ENCODE measurements at regions of chr12 and their contacts with region 1.

Region 1: DNA sequence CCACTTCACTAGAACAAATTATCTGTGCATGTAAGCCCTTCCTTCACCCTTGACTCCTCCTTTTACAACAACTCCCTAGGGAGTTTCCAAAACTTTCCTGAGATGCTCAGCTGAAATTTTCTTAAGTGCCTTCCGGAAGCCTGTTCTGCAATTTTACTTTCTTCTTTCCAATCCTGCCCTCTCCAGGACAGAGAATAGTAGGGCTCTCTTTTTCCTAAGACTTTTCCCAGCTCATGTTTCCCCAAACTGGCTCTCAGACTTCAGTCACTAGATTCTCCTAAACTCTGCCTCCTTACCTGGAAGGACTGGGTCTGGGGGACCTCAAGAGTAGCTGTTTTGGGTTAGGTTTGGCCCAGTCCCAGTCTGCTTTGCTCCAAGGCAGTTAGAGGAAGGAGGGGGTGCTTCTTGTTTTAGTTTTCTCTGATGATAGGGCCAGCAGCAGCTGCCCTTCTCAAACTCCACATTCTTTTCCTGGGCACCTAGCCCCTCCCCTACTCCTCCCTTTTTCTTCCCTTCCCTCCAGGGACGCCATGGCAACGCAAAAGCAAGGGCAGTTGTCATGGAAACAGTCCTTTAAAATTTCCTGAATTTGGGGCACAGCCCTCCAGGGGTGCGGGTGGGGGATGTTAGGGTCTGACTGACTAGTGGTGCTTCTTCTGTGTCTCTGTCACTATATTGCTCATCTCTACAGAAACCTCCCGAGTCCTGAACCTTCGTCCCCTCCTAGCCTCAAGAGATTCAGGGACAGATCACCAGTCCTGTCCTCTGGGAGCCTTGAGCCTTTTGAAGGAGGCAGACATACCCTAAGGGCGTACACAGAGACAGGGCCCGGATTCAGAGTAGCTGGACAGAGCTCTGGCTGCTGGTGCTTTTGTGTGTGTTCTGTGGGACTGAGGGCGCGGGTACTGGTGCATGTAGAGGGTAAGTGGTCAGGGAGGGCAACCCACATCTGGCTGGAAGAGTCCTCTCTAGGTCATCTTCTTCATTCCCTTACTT is 17.0 kb downstream of the PPP1R1A start:
- DNase-seq: peak; percentile 54
- ATAC-seq: peak; percentile 54
- H3K4me3 Mint-ChIP-seq: no peak overlapping the region
- H3K27ac Mint-ChIP-seq: no peak overlapping the region
- H3K4me1 Mint-ChIP-seq: peaks cover 28% of the 10 kb centered on the region
- H3K27me3 Mint-ChIP-seq: peaks cover 67% of the 10 kb centered on the region
- CTCF ChIP-seq: no peak

Region 2: GRCh38 chr12:54140588-54141388 is 430.7 kb before region 1 on chr12:
- CTCF ChIA-PET with region 1: no interaction called
- POLR2A ChIA-PET with region 1: no interaction called
- DNase-seq: no peak
- ATAC-seq: peak; percentile 59
- H3K4me3 Mint-ChIP-seq: no peak overlapping the region; the same call in 1 of the 2 replicates
- H3K27ac Mint-ChIP-seq: no peak overlapping the region
- H3K4me1 Mint-ChIP-seq: peaks cover 14% of the 10 kb centered on the region
- H3K27me3 Mint-ChIP-seq: peaks cover 90% of the 10 kb centered on the region
- CTCF ChIP-seq: no peak

Region 3: GRCh38 chr12:54549774-54550451 is 21.6 kb before region 1 on chr12:
- CTCF ChIA-PET with region 1: interaction called, 23 read pairs
- POLR2A ChIA-PET with region 1: interaction called, 3 read pairs
- DNase-seq: peak; percentile 42
- ATAC-seq: peak; percentile 69
- H3K4me3 Mint-ChIP-seq: peak overlapping the region; percentile 74
- H3K27ac Mint-ChIP-seq: no peak overlapping the region
- H3K4me1 Mint-ChIP-seq: peaks cover 27% of the 10 kb centered on the region
- H3K27me3 Mint-ChIP-seq: no peaks in the 10 kb centered on the region; the same call in 1 of the 2 replicates
- CTCF ChIP-seq: no peak

Region 4: GRCh38 chr12:54560374-54560858 is 11.1 kb before region 1 on chr12:
- CTCF ChIA-PET with region 1: interaction called, 16 read pairs
- POLR2A ChIA-PET with region 1: no interaction called
- DNase-seq: peak; percentile 91
- ATAC-seq: peak; percentile 97
- H3K4me3 Mint-ChIP-seq: peak overlapping the region; percentile 67
- H3K27ac Mint-ChIP-seq: no peak overlapping the region
- H3K4me1 Mint-ChIP-seq: peaks cover 31% of the 10 kb centered on the region
- H3K27me3 Mint-ChIP-seq: peaks cover 63% of the 10 kb centered on the region
- CTCF ChIP-seq: no peak

Region 5: DNA sequence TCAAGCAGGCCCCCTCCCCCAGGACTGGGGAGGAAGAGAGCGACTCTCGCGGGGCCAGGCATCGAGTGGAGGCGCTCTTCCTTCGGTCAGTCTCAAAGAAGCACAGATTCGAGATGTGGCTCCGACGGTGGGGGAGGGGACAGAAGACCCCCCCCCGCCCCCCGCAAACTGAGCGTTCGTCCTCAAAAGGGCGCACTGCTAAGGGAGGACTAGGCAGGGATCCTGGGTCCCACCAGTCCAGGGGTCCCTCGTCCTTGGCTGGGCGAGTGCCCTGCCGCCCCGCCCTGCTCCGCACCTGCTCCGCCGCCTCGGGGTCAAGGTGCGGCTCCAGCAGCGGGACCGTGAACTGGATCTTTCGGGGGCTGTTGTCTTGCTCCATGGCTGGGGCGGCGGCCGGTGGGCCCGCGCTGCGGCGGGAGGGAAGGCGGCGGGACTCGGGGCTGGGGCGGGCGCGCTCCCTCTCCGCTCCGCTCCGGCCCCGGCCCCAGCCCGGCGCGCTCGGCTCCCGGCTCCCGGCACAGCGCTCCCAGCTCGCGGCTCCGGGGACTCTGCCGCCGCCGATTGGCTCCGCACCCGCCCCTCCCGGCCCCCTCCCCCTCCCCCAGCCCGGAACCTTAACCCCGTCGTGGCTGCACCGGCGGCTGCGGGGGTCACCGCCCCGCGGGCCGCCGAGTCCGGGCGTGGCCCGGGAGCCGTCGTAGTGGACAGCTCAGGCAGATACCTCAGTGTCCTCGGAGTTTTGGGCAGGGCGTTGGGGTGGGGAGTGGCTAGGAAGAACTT is 16.8 kb after region 1 on chr12 and contains the start of gene PPP1R1A:
- CTCF ChIA-PET with region 1: interaction called, 16 read pairs
- POLR2A ChIA-PET with region 1: interaction called, 3 read pairs
- DNase-seq: peak; percentile 53
- ATAC-seq: peak; percentile 65
- H3K4me3 Mint-ChIP-seq: peak within 1 kb of the TSS; percentile 73
- H3K27ac Mint-ChIP-seq: no peak within 1 kb of the TSS
- H3K4me1 Mint-ChIP-seq: peaks cover 57% of the 10 kb centered on the region
- H3K27me3 Mint-ChIP-seq: peaks cover 78% of the 10 kb centered on the region
- CTCF ChIP-seq: no peak
- total RNA-seq, gene PPP1R1A: 12.4 to 15.5 TPM (median 13.1 TPM) in 3 replicates

Region 6: GRCh38 chr12:54596526-54596946 is 25.0 kb after region 1 on chr12:
- CTCF ChIA-PET with region 1: interaction called, 90 read pairs
- POLR2A ChIA-PET with region 1: no interaction called
- DNase-seq: peak; percentile 86
- ATAC-seq: peak; percentile 94
- H3K4me3 Mint-ChIP-seq: no peak overlapping the region
- H3K27ac Mint-ChIP-seq: no peak overlapping the region
- H3K4me1 Mint-ChIP-seq: peaks cover 5% of the 10 kb centered on the region
- H3K27me3 Mint-ChIP-seq: peaks cover 82% of the 10 kb centered on the region
- CTCF ChIP-seq: peak; percentile 77

Region 7: DNA sequence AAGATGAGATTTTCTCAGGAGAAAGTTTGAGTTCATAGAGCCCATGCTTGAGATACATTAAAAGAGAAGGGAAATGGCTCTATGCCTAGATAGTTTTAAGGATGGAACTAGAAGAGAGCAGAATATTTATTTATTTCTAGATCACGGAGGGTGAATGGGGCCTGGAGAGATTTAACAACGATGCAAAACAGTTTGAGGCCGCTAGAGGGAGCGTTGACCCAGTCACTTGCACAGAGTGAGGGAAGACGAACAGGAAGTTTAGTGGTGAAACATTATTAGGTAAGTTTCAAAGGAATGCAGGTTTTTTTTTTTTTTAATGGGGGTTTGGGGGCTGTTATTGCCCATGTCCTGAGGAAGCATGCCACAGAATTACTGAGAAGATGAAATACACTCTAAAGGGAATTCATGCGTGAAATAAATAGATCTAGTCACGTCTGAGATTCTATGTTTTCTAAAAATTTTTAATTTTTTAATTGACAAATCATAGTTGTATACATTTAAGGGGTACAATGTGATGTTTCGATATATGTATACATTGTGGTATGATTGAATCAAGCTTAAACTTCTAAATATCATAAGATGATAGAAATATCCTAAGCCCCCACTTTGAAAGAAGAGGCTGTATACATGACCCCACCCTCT is 31.8 kb after region 1 on chr12:
- CTCF ChIA-PET with region 1: interaction called, 90 read pairs
- POLR2A ChIA-PET with region 1: no interaction called
- DNase-seq: peak; percentile 75
- ATAC-seq: peak; percentile 90
- H3K4me3 Mint-ChIP-seq: no peak overlapping the region
- H3K27ac Mint-ChIP-seq: no peak overlapping the region
- H3K4me1 Mint-ChIP-seq: no peaks in the 10 kb centered on the region; the same call in 1 of the 2 replicates
- H3K27me3 Mint-ChIP-seq: peaks cover 45% of the 10 kb centered on the region
- CTCF ChIP-seq: peak; percentile 54; the same call in 1 of the 2 replicates

Region 8: DNA sequence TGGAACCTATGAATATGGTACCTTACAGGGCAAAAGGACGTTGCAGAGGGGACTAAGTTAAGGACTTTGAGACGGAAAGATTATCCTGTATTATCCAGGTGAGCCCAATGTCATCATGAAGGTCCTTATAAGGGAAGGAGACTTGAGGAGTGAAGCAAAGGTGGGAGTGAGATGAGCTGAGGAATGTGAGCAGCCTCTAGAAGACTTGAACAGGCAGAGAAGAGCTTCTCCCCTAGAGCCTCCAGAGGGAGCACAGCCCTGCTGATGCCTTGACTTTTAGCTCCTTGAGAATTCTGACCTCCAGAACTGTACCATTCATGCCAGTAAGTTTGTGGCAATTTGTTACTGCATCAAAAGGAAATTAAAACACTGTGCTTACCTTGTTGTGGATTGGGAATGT is 118.5 kb after region 1 on chr12:
- CTCF ChIA-PET with region 1: interaction called, 16 read pairs
- POLR2A ChIA-PET with region 1: no interaction called
- DNase-seq: peak; percentile 40
- ATAC-seq: peak; percentile 99
- H3K4me3 Mint-ChIP-seq: no peak overlapping the region
- H3K27ac Mint-ChIP-seq: no peak overlapping the region
- H3K4me1 Mint-ChIP-seq: peaks cover 20% of the 10 kb centered on the region
- H3K27me3 Mint-ChIP-seq: peaks cover 24% of the 10 kb centered on the region
- CTCF ChIP-seq: no peak

Region 9: GRCh38 chr12:55043542-55043941 is 472.1 kb after region 1 on chr12:
- CTCF ChIA-PET with region 1: no interaction called
- POLR2A ChIA-PET with region 1: no interaction called
- DNase-seq: no peak
- ATAC-seq: no peak
- H3K4me3 Mint-ChIP-seq: no peak overlapping the region
- H3K27ac Mint-ChIP-seq: no peak overlapping the region
- H3K4me1 Mint-ChIP-seq: peaks cover 33% of the 10 kb centered on the region
- H3K27me3 Mint-ChIP-seq: peaks cover 2% of the 10 kb centered on the region; the same call in 1 of the 2 replicates
- CTCF ChIP-seq: no peak